ENCODE measurements at regions of chr3 and their contacts with region 1.

Region 1: GRCh38 chr3:126752303-126752842 is 48.3 kb downstream of the CHCHD6 start:
- DNase-seq: peak; percentile 89
- ATAC-seq: peak; percentile 93

Region 2: GRCh38 chr3:126971891-126972351 is 219.5 kb after region 1 on chr3:
- intact Hi-C with region 1: loop called (anchors 10 kb)
- DNase-seq: peak; percentile 81
- ATAC-seq: peak; percentile 88